ENCODE measurements at regions of chr22 and their contacts with region 1.

Region 1: GRCh38 chr22:29245637-29246385 is 22.0 kb downstream of the RHBDD3 start:
- DNase-seq: peak; percentile 80
- ATAC-seq: peak; percentile 95
- H3K4me3 Mint-ChIP-seq: no peak overlapping the region
- H3K27ac Mint-ChIP-seq: no peak overlapping the region
- H3K4me1 Mint-ChIP-seq: no peaks in the 10 kb centered on the region
- H3K27me3 Mint-ChIP-seq: peaks cover 16% of the 10 kb centered on the region
- CTCF ChIP-seq: peak; percentile 99

Region 2: GRCh38 chr22:29040385-29041275 is 205.2 kb before region 1 on chr22:
- CTCF ChIA-PET with region 1: interaction called, 14 read pairs
- POLR2A ChIA-PET with region 1: no interaction called
- DNase-seq: peak; percentile 68
- ATAC-seq: peak; percentile 81
- H3K4me3 Mint-ChIP-seq: no peak overlapping the region
- H3K27ac Mint-ChIP-seq: peak overlapping the region; percentile 72
- H3K4me1 Mint-ChIP-seq: peaks cover 3% of the 10 kb centered on the region; the same call in 1 of the 2 replicates
- H3K27me3 Mint-ChIP-seq: no peaks in the 10 kb centered on the region
- CTCF ChIP-seq: peak; percentile 90

Region 3: DNA sequence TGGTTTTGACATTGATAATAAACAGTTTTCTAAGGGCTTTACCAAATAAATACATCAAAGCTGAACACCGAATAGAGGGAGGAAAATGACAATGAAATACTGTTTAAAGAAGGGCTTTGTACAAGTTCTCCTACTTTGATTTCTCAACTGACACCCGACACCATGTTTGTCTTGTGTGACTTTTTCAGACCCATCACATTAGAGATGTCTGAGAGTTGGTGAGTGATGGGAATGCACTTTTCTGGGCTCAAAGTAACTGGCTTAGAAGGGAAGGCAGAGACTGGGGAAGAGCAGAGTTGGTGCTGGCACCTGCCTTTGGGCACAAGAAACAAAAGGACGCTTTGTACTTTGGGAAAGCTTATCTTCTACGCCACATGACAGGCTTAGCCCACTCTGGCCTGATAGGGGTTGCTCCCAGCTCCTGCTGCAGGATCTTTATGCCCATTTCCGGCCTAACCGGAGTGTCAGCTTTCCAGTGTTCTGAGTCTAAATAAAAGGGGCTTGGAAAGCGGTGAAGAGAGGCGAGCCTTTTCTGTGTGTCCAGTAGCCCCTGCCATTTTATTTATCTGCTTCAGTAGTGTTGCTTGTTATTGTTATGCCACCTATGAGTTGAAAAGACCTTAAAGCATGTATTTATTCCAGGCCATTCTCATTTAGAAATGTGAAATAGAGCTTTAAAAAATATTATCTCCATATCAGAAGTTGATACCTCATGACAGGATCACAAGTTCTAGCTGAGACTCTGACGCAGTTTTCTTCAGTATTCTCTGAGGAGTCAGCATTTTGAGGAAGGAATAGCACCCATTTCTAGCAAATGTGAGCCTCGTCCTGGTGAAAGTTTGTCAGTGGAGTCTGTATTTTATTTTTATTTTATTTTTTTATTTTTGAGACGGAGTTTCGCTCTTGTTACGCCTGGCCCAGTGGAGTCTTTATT is 148.8 kb before region 1 on chr22:
- CTCF ChIA-PET with region 1: interaction called, 10 read pairs
- POLR2A ChIA-PET with region 1: no interaction called
- DNase-seq: peak; percentile 18
- ATAC-seq: peak; percentile 62
- H3K4me3 Mint-ChIP-seq: no peak overlapping the region
- H3K27ac Mint-ChIP-seq: no peak overlapping the region
- H3K4me1 Mint-ChIP-seq: peaks cover 24% of the 10 kb centered on the region
- H3K27me3 Mint-ChIP-seq: no peaks in the 10 kb centered on the region
- CTCF ChIP-seq: no peak

Region 4: GRCh38 chr22:29128891-29129807 is 116.7 kb before region 1 on chr22:
- CTCF ChIA-PET with region 1: no interaction called
- POLR2A ChIA-PET with region 1: no interaction called
- DNase-seq: no peak
- ATAC-seq: no peak; the same call in 1 of the 2 replicates
- H3K4me3 Mint-ChIP-seq: no peak overlapping the region
- H3K27ac Mint-ChIP-seq: peak overlapping the region; percentile 57; the same call in 1 of the 2 replicates
- H3K4me1 Mint-ChIP-seq: peaks cover 3% of the 10 kb centered on the region; the same call in 1 of the 2 replicates
- H3K27me3 Mint-ChIP-seq: no peaks in the 10 kb centered on the region
- CTCF ChIP-seq: no peak

Region 5: DNA sequence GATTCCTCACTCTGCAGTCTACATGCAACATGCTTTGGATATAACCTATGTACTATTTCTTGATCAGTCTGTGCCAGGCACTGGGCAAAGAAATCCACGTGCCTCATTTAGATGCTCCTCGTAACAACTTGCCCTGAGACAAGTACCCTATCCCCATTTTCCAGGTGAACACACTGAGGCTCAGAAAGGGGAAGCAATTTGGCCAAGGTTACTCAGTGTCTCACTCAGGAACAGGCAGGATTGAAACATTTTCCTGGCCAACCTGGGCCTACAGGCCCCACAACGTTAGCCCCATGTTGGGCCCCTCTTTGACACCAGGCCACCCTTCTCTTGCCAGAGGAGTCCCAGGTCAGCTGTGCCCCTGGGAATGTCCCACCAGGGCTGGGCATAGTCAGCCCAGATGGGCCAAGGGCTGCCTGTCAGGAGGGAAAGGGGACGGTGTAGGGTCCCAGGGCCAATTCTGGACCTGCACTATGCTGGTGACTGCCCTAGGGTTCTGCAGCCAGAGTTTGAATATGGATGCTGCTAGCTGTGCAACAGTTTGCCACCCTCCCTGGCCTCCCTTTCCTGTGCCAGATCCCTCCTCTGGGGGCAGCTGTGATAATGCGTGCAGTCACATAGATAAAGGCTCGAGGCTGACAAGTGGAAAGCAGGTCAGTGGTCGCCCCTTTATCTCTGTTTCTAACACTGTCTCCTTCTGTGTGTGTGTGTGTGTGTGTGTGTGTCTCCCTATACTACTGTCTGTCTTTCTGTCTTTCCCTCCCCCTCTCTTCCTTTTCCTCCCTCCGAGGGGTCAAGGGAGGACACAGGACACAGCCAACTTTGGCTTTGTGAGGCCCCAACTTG is 50.5 kb before region 1 on chr22:
- CTCF ChIA-PET with region 1: interaction called, 13 read pairs
- POLR2A ChIA-PET with region 1: interaction called, 4 read pairs
- DNase-seq: no peak
- ATAC-seq: no peak; the same call in 1 of the 2 replicates
- H3K4me3 Mint-ChIP-seq: no peak overlapping the region
- H3K27ac Mint-ChIP-seq: no peak overlapping the region
- H3K4me1 Mint-ChIP-seq: no peaks in the 10 kb centered on the region
- H3K27me3 Mint-ChIP-seq: no peaks in the 10 kb centered on the region
- CTCF ChIP-seq: no peak

Region 6: DNA sequence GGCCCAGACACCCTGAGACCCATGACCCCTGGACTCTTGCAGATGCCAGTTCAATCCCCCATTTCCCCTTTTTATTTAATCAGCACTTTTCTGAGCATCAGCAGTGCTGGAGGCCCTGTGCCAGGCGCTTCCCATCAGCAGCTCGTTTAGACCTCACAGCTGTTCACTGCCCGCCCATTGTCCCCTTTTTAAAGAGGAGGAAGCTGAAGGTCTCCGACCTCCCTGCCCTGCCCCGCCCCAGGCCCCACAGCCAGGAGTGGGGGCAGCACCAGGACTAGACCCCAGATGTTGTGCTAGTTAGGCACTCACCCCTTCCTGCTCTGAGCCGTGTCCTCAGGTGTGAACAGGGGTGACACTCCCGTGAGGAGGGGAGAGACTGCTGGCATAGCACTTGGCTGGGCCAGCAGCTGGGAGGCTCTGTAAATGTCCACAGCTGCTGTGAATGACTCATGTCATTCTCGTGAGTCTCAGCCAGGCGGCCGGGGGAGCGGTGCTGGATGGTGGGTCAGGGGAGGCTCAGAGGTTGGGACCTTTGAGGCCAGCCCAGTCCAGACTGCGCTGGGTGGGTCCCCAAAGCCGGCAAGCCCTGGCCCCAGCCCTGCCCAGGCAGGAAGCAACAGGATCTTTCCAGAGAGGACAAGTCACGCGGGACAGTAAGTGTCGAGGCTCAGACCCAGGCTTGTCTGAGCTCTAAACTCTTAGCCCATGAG is 20.2 kb before region 1 on chr22:
- CTCF ChIA-PET with region 1: interaction called, 22 read pairs
- POLR2A ChIA-PET with region 1: interaction called, 3 read pairs
- DNase-seq: no peak
- ATAC-seq: no peak
- H3K4me3 Mint-ChIP-seq: no peak overlapping the region
- H3K27ac Mint-ChIP-seq: no peak overlapping the region; the same call in 1 of the 2 replicates
- H3K4me1 Mint-ChIP-seq: peaks cover 2% of the 10 kb centered on the region
- H3K27me3 Mint-ChIP-seq: peaks cover 3% of the 10 kb centered on the region; the same call in 1 of the 2 replicates
- CTCF ChIP-seq: no peak

Region 7: GRCh38 chr22:29267858-29268417 is 22.1 kb after region 1 on chr22 and contains the starts of genes EWSR1 and RHBDD3:
- CTCF ChIA-PET with region 1: interaction called, 10 read pairs
- POLR2A ChIA-PET with region 1: no interaction called
- DNase-seq: peak; percentile 91
- ATAC-seq: peak; percentile 77
- H3K4me3 Mint-ChIP-seq: peak within 1 kb of the TSS; percentile 85
- H3K27ac Mint-ChIP-seq: peak within 1 kb of the TSS; percentile 96
- H3K4me1 Mint-ChIP-seq: peaks cover 41% of the 10 kb centered on the region
- H3K27me3 Mint-ChIP-seq: peaks cover 4% of the 10 kb centered on the region
- CTCF ChIP-seq: no peak
- total RNA-seq, gene EWSR1: 377 to 400 TPM (median 384 TPM) in 3 replicates
- total RNA-seq, gene RHBDD3: 69.6 to 78.2 TPM (median 77.9 TPM) in 3 replicates

Region 8: GRCh38 chr22:29375398-29376076 is 129.7 kb after region 1 on chr22:
- CTCF ChIA-PET with region 1: no interaction called
- POLR2A ChIA-PET with region 1: no interaction called
- DNase-seq: no peak
- ATAC-seq: no peak
- H3K4me3 Mint-ChIP-seq: no peak overlapping the region
- H3K27ac Mint-ChIP-seq: peak overlapping the region; percentile 87
- H3K4me1 Mint-ChIP-seq: peaks cover 13% of the 10 kb centered on the region
- H3K27me3 Mint-ChIP-seq: no peaks in the 10 kb centered on the region
- CTCF ChIP-seq: no peak